Lower leg skin (tissue), 4 donors: ENCODE measurements at regions of chr5 and their contacts with region 1.

Region 1: GRCh38 chr5:139787568-139788293 is 7.9 kb upstream of the PSD2 start:
- DNase-seq: peak; percentile 79 to 98
- H3K4me3 ChIP-seq: peak overlapping the region; percentile 14
- CTCF ChIP-seq: peak in 1 of 3 donors; percentile 38
- POLR2A ChIP-seq: no peak

Region 2: DNA sequence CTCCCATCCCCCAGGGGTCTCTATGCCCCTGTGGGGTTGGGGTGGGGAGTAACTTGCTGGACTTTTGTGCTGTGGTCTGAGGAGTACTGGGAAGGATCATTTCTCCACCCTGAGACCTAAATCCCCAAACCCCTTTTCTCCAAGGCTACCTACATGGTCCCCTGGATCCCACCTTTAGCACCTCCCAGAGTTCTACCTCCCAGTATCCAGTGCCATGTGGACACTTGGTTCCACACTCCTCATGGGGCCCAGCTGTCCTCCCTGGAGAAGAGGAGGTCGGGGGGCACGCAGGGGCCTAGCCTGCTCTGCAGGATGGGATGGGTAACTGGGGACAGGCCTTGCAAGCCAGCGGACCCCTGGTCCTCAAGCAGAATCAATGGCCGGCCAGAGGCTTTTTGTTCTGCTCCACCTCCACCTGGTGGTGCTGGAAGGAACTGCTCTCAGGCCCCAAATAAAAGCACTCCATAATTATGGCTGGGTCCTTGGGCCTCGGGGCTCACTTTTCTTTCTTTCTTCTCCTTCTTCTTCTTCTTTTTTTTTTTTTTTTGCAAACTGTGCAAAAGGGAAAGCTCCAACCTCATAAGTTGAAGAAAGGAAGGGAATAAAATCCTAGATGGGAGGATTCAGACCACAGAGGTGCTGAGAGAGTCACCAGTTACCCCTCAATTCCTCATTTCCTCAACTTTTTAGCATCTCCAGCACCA is 76.3 kb after region 1 on chr5:
- intact Hi-C with region 1: loop called (anchors 5 kb)
- DNase-seq: peak; percentile 47 to 92
- H3K4me3 ChIP-seq: no peak overlapping the region
- CTCF ChIP-seq: peak in 1 of 3 donors; percentile 49
- POLR2A ChIP-seq: no peak

Region 3: DNA sequence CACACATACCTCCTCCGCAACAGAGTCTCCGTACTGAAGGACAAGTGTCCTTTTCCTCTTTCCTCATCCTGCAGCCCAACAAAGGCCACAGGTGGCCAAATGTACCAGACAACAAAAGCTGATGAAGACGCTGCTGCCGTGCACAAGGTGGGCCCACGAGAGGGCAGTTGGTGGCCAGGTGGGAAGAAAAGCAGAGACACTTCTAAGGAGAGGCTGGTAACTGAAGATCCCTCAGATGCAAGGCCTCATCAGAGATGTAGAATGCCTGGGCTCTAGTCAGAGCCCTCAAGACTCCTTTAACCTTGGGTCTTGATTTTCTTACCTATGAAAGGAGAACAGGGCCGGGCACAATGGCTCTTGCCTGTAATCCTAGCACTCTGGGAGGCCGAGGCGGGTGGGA is 179.6 kb after region 1 on chr5:
- intact Hi-C with region 1: loop called (anchors 1 kb)
- DNase-seq: no peak
- H3K4me3 ChIP-seq: no peak overlapping the region
- CTCF ChIP-seq: no peak
- POLR2A ChIP-seq: no peak